Activated CD4-positive, alpha-beta T cell treated with anti-CD3 and anti-CD28 coated beads, Interleukin-2, amount 10 ng/mL, durations not matched to agents 7 days and 5 days (primary cell): ENCODE measurements at regions of chr12 and their contacts with region 1.

Region 1: GRCh38 chr12:121550974-121551634 is 29.7 kb downstream of the KDM2B start:
- DNase-seq: no peak
- H3K4me3 Mint-ChIP-seq: no peak overlapping the region
- H3K27ac Mint-ChIP-seq: no peak overlapping the region
- H3K4me1 Mint-ChIP-seq: peaks cover 17% of the 10 kb centered on the region
- H3K27me3 Mint-ChIP-seq: no peaks in the 10 kb centered on the region

Region 2: DNA sequence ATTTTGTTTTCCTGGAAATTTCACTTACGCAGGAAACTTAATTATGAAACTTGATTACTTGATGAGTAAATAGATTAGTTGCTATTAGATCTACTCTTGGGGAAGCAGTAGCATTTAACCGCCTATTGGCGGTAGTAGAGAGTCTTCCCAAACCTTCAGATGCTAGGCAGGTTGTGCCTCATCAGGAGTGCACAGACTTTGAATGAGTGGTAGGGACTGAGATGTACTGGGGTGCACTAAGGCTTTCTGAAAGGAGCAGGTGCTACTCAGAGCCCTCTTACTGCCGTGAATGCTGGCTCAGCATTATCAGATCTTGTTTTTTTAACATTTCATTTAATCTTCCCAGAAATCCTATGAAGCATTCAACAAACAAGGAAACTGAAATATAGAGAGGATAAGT is 1097.1 kb before region 1 on chr12:
- CTCF ChIA-PET with region 1: no interaction called
- POLR2A ChIA-PET with region 1: no interaction called
- DNase-seq: peak; percentile 40
- H3K4me3 Mint-ChIP-seq: no peak overlapping the region
- H3K27ac Mint-ChIP-seq: no peak overlapping the region
- H3K4me1 Mint-ChIP-seq: peaks cover 7% of the 10 kb centered on the region
- H3K27me3 Mint-ChIP-seq: no peaks in the 10 kb centered on the region

Region 3: DNA sequence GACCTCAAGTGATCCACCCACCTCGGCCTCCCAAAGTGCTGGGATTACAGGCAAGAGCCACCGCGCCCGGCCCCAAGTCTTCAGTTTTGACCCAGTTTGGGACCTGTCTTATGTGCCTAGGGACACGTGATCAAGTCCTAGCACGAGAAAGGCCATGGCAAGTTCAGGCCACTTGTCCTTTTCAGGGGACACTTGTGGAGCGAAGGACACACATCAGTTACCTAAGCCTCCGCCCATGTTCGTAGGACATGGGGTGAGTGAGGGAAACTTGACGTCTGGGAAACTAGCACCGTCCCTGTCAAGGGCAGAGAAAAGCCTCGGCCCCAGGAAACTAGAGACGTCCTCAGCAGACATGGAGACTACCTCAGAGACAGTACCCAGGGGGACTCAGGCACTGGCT is 31.0 kb before region 1 on chr12:
- CTCF ChIA-PET with region 1: no interaction called
- POLR2A ChIA-PET with region 1: no interaction called
- DNase-seq: no peak
- H3K4me3 Mint-ChIP-seq: no peak overlapping the region
- H3K27ac Mint-ChIP-seq: no peak overlapping the region
- H3K4me1 Mint-ChIP-seq: peaks cover 6% of the 10 kb centered on the region
- H3K27me3 Mint-ChIP-seq: no peaks in the 10 kb centered on the region

Region 4: DNA sequence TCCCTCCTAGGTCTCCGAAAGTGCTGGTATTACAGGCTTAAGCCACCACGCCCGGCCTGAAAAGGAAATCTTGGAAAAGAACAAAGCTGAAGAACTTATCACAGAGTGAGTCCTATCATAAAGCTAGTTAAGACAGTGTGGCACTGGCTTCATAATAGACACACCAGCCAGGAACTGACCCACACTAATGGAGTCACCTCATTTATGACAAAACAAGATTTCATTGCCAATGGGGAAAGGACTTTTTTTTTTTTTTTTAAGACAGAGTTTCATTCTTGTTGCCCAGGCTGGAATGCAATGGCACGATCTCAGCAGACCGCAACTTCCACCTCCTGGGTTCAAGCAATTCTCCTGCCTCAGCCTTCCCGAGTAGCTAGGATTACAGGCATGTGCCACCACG is 14.0 kb after region 1 on chr12:
- CTCF ChIA-PET with region 1: interaction called, 12 read pairs
- POLR2A ChIA-PET with region 1: no interaction called
- DNase-seq: no peak
- H3K4me3 Mint-ChIP-seq: no peak overlapping the region
- H3K27ac Mint-ChIP-seq: no peak overlapping the region
- H3K4me1 Mint-ChIP-seq: peaks cover 23% of the 10 kb centered on the region
- H3K27me3 Mint-ChIP-seq: no peaks in the 10 kb centered on the region

Region 5: GRCh38 chr12:121668750-121669520 is 117.8 kb after region 1 on chr12:
- CTCF ChIA-PET with region 1: interaction called, 23 read pairs
- POLR2A ChIA-PET with region 1: no interaction called
- DNase-seq: peak; percentile 67
- H3K4me3 Mint-ChIP-seq: no peak overlapping the region
- H3K27ac Mint-ChIP-seq: peak overlapping the region; percentile 73
- H3K4me1 Mint-ChIP-seq: peaks cover 64% of the 10 kb centered on the region
- H3K27me3 Mint-ChIP-seq: no peaks in the 10 kb centered on the region

Region 6: DNA sequence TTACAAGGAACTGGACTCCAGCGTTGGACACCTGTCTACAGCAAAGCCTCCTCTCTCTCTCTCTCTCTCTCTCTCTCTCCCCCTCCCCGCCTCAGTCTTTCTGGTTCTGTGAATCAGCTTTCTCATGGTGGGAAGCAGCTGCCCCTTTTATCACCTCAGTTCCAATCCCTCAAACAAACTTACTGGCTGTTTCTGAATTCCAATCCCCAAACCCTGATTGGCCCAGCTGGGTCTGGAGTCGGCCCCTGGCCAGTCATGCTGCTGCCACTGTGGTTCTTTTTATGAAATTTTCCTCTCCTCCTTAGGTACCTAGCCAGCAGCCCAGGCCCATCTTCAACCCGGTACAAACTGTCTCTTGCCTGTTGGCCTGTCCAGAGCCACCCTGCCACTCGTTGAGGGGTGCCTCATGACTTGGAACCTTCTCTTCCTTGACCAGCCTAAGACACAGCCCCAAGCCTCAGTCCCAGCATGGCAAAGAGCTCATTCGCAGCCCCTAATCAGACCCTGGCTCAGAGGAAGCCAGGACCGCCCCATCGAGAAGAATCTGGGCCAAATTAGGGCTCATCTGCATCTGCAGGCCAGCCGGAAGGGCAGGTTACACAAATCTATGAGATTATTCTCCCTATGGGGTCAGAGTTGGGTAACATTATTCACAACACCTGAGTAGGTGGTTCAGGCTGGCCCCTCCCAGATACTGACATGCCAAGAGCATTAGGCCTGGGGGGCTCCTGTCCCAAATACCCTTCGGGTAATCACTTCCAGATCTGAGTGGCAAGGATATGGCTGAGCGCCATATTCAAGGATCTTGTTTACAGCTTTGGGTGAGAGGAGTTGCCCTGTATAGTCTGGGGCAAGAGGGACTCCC is 127.8 kb after region 1 on chr12:
- CTCF ChIA-PET with region 1: interaction called, 10 read pairs
- POLR2A ChIA-PET with region 1: no interaction called
- DNase-seq: no peak
- H3K4me3 Mint-ChIP-seq: peak overlapping the region; percentile 10
- H3K27ac Mint-ChIP-seq: peak overlapping the region; percentile 80
- H3K4me1 Mint-ChIP-seq: peaks cover 26% of the 10 kb centered on the region
- H3K27me3 Mint-ChIP-seq: no peaks in the 10 kb centered on the region